Dorsolateral prefrontal cortex (tissue), 120 donors: ENCODE measurements at regions of chr6 and their contacts with region 1.

Region 1: GRCh38 chr6:70369332-70369950 is 43.9 kb upstream of the FAM135A start:
- DNase-seq: peak in 9 of 10 donors; percentile 31 to 79 (median 57)
- H3K4me3 ChIP-seq: no peak overlapping the region
- H3K27ac ChIP-seq: no peak overlapping the region
- H3K27me3 ChIP-seq: peaks cover 0 to 3% (median 0%) of the 10 kb centered on the region in 45 donors
- CTCF ChIP-seq: peak; percentile 55 to 97 (median 93)

Region 2: GRCh38 chr6:70221025-70221714 is 148.3 kb before region 1 on chr6:
- intact Hi-C with region 1: loop called in 1 of 2 experiments (anchors 2 kb)
- DNase-seq: peak in 1 of 10 donors; percentile 23
- H3K4me3 ChIP-seq: peak overlapping the region in 1 of 59 donors; percentile 17
- H3K27ac ChIP-seq: no peak overlapping the region
- H3K27me3 ChIP-seq: peaks cover 0 to 4% (median 0%) of the 10 kb centered on the region in 45 donors
- CTCF ChIP-seq: peak; percentile 76 to 98 (median 89)

Region 3: GRCh38 chr6:70310063-70310694 is 59.3 kb before region 1 on chr6:
- intact Hi-C with region 1: loop called (anchors 2 to 5 kb)
- DNase-seq: no peak
- H3K4me3 ChIP-seq: no peak overlapping the region
- H3K27ac ChIP-seq: no peak overlapping the region
- H3K27me3 ChIP-seq: peaks cover 0 to 9% (median 0%) of the 10 kb centered on the region in 45 donors
- CTCF ChIP-seq: peak; percentile 59 to 91 (median 77)

Region 4: GRCh38 chr6:70413114-70413991 is 43.9 kb after region 1 on chr6 and contains the start of gene FAM135A:
- intact Hi-C with region 1: loop called in 1 of 2 experiments (anchors 5 kb)
- DNase-seq: peak; percentile 85 to 99 (median 96)
- H3K4me3 ChIP-seq: peak within 1 kb of the TSS; percentile 55 to 99 (median 91)
- H3K27ac ChIP-seq: peak within 1 kb of the TSS; percentile 13 to 96 (median 88)
- H3K27me3 ChIP-seq: no peaks in the 10 kb centered on the region
- CTCF ChIP-seq: peak in 12 of 56 donors; percentile 5 to 33 (median 14)
- total RNA-seq, gene FAM135A: 34.3 to 72.1 (median 49.1) TPM

Region 5: GRCh38 chr6:71012866-71013469 is 643.5 kb after region 1 on chr6:
- intact Hi-C with region 1: loop called in 1 of 2 experiments (anchors 10 kb)
- DNase-seq: peak in 1 of 10 donors; percentile 35
- H3K4me3 ChIP-seq: no peak overlapping the region
- H3K27ac ChIP-seq: no peak overlapping the region
- H3K27me3 ChIP-seq: peaks cover 0 to 5% (median 0%) of the 10 kb centered on the region in 45 donors
- CTCF ChIP-seq: peak; percentile 55 to 90 (median 77)